ENCODE measurements at regions of chr6 and their contacts with region 1.

Region 1: DNA sequence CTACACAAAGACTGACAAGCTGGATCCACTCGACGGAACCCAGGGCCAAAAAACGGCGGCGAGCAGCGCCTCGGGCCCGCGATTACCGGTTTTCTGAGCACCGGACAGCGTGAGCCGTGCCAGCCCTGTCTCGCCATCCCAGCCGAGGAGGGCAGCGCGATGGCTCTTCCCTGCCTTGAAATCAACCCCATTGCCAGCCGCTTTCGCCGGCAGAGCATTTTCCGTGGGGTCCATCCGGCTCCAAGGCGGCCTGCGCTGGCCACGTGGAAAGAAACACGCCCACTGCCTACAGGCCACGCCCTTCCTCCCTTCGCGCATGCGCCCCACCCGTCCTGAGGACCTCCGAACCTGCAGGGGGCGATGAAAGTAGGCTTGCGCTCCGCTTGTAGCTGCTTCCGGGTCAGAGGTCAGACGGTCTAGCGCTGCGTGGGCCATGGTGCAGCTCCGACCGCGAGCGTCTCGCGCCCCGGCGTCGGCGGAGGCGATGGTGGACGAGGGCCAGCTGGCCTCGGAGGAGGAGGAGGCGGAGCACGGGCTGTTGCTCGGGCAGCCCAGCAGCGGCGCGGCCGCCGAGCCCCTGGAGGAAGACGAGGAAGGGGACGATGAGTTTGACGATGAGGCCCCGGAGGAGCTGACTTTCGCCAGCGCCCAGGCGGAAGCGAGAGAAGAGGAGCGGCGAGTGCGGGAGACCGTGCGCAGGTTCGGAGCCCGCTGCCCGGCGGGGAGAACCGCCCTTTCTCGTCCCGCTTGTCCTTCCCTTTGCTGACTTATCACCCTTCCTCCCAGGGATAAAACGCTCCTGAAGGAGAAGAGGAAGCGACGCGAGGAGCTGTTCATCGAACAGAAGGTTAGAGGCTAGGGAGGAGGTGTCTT is at the start of gene NOL7:
- DNase-seq: peak; percentile 98
- ATAC-seq: peak; percentile 91
- H3K4me3 Mint-ChIP-seq: peak within 1 kb of the TSS; percentile 98
- H3K27ac Mint-ChIP-seq: peak within 1 kb of the TSS; percentile 94
- H3K4me1 Mint-ChIP-seq: peaks cover 43% of the 10 kb centered on the region
- H3K27me3 Mint-ChIP-seq: no peaks in the 10 kb centered on the region
- CTCF ChIP-seq: peak; percentile 30
- total RNA-seq, gene NOL7: 67.5 and 74.4 TPM in 2 replicates

Region 2: DNA sequence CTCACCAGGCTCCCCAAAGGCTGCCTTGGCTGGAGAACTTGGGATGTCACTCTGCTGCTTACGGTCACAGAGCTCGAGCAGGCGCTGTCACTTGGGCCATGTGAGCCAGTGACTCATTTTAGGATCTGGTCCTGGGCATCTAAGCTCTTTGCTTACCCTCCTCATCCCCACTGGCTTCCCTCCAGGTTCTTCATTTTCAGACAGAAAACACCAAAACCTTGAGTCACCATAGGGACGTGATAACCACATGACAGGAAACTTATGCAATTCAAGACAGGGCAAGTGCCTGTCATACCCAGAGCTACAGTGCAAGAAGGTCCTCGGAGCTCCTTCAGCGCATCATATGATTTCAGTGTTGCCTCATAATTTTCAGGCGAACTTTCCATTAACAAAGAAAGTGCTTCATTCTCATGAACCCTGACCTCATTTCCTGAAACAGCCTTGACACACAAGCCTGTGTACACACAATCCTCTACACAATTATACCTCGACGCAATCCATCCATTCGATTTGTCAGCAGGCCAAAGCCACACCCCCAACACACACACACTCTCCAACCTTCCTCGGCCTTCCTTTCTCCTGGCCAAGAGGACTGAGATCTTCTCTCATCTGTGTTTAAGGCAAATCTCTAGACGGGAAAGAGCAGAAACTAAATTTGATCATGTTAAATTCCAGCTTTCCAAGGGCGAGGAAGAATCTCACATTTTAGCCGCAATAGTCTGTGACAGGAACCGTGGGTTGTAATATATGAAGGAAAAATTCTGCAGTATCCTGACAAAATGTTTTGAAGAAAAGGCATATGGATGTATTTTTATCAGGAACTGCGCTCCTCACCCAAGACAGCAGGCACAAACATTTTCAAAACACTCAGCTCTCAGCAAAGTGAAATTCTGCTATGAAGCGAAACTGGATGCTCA is 312.2 kb before region 1 on chr6:
- CTCF ChIA-PET with region 1: no interaction called
- POLR2A ChIA-PET with region 1: interaction called, 4 read pairs
- intact Hi-C with region 1: loop called (anchors 1 kb)
- DNase-seq: no peak
- ATAC-seq: peak; percentile 55
- H3K4me3 Mint-ChIP-seq: peak overlapping the region; percentile 63
- H3K27ac Mint-ChIP-seq: peak overlapping the region; percentile 92
- H3K4me1 Mint-ChIP-seq: peaks cover 79% of the 10 kb centered on the region
- H3K27me3 Mint-ChIP-seq: no peaks in the 10 kb centered on the region
- CTCF ChIP-seq: no peak

Region 3: DNA sequence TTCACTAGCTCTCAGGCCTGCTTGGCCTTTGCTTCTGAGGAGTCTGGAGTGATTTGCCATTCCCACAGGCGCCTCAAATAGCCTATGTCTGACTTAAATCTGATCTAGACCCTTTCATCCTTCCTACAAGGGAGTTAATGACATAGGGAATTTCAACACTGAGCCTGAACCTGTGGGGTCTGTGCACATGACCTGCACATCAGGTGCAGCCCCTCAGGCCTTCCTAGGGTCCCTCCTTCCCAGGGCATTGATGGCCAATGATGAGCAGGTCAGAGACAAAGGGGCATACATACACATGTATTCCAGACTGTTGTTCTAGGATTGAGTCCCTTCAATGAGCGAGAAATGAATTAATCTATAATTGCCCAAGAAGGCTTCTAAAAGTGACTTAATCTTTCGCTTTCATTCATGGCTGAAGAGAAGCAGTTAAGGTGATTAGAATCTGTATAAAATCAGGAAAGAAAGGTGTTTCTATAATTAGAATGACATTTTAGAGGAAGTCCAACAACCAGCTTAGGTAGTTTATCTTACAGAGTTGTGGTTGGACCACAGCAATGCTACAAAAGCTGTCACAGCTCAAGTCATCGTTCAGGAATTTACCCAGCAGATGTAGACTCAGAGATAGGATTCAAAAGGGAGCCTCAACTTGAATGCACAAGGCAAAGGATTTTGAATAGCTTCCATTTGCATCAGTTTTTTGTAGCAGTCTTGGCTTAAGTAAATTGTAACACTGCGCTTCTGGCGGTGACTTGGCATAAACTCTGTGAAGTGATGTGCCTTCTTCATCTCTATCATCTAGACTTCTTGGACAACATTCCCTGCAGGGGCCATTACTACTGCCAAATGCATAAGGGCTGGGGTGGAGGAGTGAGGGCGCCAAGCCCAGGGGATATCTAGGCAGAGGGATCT is 259.9 kb before region 1 on chr6:
- CTCF ChIA-PET with region 1: interaction called, 4 read pairs
- POLR2A ChIA-PET with region 1: interaction called, 38 read pairs
- intact Hi-C with region 1: no loop called
- DNase-seq: no peak
- ATAC-seq: peak; percentile 46
- H3K4me3 Mint-ChIP-seq: peak overlapping the region; percentile 70
- H3K27ac Mint-ChIP-seq: peak overlapping the region; percentile 92
- H3K4me1 Mint-ChIP-seq: peaks cover 70% of the 10 kb centered on the region
- H3K27me3 Mint-ChIP-seq: no peaks in the 10 kb centered on the region
- CTCF ChIP-seq: no peak

Region 4: GRCh38 chr6:13454286-13455221 is 160.6 kb before region 1 on chr6:
- CTCF ChIA-PET with region 1: interaction called, 8 read pairs
- POLR2A ChIA-PET with region 1: interaction called, 9 read pairs
- intact Hi-C with region 1: loop called (anchors 1 kb)
- DNase-seq: peak; percentile 37
- ATAC-seq: peak; percentile 81
- H3K4me3 Mint-ChIP-seq: peak overlapping the region; percentile 65
- H3K27ac Mint-ChIP-seq: peak overlapping the region; percentile 85
- H3K4me1 Mint-ChIP-seq: peaks cover 60% of the 10 kb centered on the region
- H3K27me3 Mint-ChIP-seq: no peaks in the 10 kb centered on the region
- CTCF ChIP-seq: no peak

Region 5: GRCh38 chr6:13574149-13574570 is 41.0 kb before region 1 on chr6:
- CTCF ChIA-PET with region 1: interaction called, 23 read pairs
- POLR2A ChIA-PET with region 1: interaction called, 84 read pairs
- intact Hi-C with region 1: loop called (anchors 1 kb)
- DNase-seq: peak; percentile 89
- ATAC-seq: peak; percentile 84
- H3K4me3 Mint-ChIP-seq: peak overlapping the region; percentile 90
- H3K27ac Mint-ChIP-seq: peak overlapping the region; percentile 94
- H3K4me1 Mint-ChIP-seq: peaks cover 23% of the 10 kb centered on the region
- H3K27me3 Mint-ChIP-seq: no peaks in the 10 kb centered on the region
- CTCF ChIP-seq: no peak

Region 6: DNA sequence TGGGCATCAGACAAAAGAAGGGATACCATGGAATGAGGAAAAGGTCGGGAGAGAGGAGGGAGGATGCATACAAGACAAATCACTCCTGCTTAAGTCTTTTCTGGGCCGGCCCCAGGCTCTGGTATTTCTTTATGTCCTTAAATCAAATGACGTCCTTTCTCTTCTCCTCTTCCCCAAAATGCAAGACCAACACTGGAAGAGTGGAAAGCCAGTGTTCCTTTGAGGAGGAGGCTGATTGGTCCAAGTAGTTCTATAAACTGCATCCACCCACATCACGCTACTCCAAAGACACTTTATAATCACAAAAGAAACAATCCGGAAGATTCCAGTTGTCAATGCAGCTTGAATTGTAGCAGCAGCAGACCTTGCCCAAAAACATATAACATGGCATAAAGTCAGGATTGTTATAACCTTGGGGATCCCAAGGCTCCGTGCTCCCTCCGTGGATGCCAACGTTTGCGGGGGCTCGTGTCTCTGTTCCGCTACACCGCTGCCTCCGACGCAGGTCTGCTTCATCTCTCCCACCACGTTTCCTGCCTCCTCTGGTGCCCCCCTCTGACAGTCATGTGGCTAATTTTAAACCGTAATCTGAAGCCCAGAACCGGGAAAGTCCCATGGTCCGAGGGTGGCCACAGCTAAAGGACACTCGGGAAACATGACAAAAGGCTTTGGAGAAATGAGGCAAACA is 152.1 kb after region 1 on chr6:
- CTCF ChIA-PET with region 1: no interaction called
- POLR2A ChIA-PET with region 1: interaction called, 11 read pairs
- intact Hi-C with region 1: loop called (anchors 5 kb)
- DNase-seq: no peak
- ATAC-seq: peak; percentile 49
- H3K4me3 Mint-ChIP-seq: peak overlapping the region; percentile 81
- H3K27ac Mint-ChIP-seq: no peak overlapping the region
- H3K4me1 Mint-ChIP-seq: peaks cover 45% of the 10 kb centered on the region
- H3K27me3 Mint-ChIP-seq: no peaks in the 10 kb centered on the region
- CTCF ChIP-seq: no peak

Region 7: DNA sequence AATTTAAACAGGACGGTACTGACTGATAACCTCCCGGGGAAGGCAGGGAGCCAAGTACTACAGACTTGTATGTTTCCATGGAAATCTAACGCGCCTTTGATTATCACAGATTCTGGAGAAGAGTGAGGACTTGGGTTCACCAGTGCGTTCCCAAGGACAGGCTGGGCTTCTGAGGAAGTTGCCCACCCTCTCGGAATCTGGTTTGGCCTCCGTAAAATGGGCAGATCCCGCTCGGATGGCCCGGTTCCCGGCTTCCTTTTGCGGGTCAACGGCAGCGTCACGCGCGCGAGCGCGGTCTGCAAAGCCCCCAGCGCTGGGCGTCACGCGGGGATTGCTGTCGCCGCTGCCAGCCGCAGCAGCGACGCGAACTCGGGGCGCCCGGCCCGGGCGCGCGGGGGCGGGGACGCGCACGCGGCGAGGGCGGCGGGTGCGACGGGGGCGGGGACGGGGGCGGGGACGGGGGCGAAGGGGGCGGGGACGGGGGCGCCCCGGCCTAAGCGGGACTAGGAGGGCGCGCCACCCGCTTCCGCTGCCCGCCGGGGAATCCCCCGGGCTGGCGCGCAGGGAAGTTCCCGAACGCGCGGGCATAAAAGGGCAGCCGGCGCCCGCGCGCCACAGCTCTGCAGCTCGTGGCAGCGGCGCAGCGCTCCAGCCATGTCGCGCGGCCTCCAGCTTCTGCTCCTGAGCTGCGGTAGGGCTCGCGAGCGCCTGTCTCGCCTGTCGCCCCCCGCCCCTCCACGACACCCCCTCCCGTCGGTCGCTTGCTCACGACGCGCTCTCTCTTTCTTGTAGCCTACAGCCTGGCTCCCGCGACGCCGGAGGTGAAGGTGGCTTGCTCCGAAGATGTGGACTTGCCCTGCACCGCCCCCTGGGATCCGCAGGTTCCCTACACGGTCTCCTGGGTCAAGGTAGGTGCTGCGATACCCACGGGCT is 502.3 kb after region 1 on chr6 and contains the start of gene CD83:
- CTCF ChIA-PET with region 1: no interaction called
- POLR2A ChIA-PET with region 1: no interaction called
- intact Hi-C with region 1: loop called (anchors 1 kb)
- DNase-seq: peak; percentile 91
- ATAC-seq: peak; percentile 72
- H3K4me3 Mint-ChIP-seq: peak within 1 kb of the TSS; percentile 95
- H3K27ac Mint-ChIP-seq: peak within 1 kb of the TSS; percentile 94
- H3K4me1 Mint-ChIP-seq: peaks cover 47% of the 10 kb centered on the region
- H3K27me3 Mint-ChIP-seq: no peaks in the 10 kb centered on the region
- CTCF ChIP-seq: no peak
- total RNA-seq, gene CD83: 483 and 492 TPM in 2 replicates